Tibial artery (tissue), 4 donors: ENCODE measurements at regions of chr13 and their contacts with region 1.

Region 1: DNA sequence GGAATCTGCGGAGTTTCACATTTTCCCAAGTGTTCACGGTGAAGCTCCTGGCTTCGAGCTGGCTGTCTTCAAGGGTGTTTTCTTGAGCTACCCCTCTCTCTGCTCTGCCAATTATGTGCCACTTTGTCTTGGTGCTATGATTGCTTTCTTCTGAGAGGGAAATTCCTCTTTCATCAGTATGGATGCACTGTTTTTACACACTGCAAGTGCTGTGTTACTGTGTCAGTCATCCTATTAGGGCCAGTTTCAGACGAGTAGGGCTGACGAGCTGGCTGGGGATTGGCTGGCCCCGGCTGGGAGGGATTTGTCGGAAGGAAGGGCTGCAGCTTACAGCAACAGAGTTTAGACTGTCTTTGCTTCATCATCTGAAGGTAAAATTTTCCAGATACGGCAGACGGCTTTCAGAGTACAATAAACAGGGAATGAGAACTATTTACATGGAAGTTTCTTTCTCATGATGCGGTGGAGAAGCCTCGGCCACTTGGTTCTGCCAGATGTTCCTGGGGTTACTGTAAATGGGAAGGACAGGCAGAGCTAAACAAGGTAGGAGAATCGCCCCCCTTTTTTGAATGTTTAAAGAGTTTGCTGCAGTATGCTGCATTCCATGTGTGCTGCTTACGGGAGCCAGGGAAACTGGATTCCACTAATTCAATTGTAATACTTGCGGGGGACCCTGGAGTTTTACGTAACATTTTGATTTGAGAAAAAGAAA is at the start of gene MBNL2:
- DNase-seq: peak; percentile 90 to 94
- H3K4me3 ChIP-seq: peak within 1 kb of the TSS; percentile 65 to 72
- H3K27ac ChIP-seq: peak within 1 kb of the TSS; percentile 78 to 84
- H3K4me1 ChIP-seq: peaks cover 0 to 29% (median 18%) of the 10 kb centered on the region in 4 donors
- H3K27me3 ChIP-seq: no peaks in the 10 kb centered on the region
- CTCF ChIP-seq: no peak

Region 2: DNA sequence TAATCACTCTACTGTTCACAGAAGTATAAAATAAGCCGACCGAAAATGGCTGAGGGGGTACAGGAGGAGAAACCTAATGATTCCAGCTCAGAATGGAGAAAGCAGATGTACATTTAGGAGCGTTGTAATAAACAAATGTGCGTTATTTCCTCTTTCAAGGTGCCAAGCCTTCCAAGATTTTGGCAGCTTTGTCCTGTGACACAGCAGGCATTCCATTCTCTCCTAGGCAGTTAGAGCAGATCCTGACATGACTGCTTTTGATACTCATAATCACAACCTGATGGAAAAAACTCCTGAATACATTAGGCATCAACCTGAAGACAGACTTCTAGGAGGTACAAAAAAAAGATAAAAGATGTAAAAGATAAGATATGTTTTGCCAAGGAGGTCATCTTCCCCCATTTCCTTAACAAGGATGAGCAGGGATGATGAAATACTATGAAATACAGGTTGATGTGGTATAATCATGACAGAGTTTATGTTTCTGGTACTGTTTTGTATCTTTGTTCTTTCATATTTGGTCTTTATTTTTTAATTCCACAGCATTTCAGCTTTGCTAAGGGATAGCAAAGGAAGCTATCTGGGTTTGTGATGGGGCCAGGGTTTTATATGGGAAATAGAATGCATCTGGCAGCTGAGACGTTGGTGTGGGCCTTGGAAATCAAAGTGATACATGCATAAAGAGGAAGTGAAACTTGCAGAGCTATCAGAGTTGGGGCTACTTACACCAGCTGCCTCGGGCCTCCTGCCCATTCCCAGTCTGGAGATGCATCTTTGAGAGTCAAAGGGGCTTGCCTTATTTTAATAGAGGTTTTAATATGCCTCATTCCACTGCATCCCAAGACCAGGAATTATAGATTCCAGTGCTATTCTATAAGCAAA is 450.4 kb before region 1 on chr13:
- intact Hi-C with region 1: no loop called
- DNase-seq: peak in 1 of 2 donors; percentile 41
- H3K4me3 ChIP-seq: no peak overlapping the region
- H3K27ac ChIP-seq: no peak overlapping the region
- H3K4me1 ChIP-seq: no peaks in the 10 kb centered on the region
- H3K27me3 ChIP-seq: no peaks in the 10 kb centered on the region
- CTCF ChIP-seq: no peak

Region 3: DNA sequence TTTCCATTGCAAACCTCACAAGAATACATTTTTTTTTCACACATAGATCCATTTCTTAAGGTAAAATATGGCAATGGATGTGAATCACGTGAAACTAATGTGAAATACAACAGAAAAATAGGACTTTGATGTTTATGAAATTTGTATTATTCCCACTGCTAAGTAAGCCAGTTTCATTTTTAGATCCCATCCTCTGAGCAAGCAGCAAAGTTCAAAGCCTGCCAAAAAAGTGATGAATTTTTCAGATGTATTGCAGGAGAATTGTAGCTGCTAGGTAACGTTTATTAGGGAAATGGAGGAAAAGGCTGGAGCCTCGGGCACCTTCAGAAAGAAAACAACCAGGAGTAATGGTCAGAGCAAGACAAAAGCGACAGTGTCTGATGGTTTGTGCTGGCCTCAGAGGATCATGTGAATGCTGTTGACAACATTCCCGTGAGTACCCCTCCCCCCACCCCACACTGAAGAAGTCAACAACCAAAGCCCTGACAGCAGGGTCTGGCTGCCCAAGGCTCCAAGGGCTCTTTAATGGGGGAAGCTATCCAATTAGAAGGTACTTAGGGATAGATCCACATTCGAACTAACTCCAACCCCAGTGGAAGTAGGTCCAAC is 323.4 kb before region 1 on chr13:
- intact Hi-C with region 1: no loop called
- DNase-seq: no peak
- H3K4me3 ChIP-seq: no peak overlapping the region
- H3K27ac ChIP-seq: peak overlapping the region; percentile 38 to 47
- H3K4me1 ChIP-seq: peaks cover 0 to 13% (median 4%) of the 10 kb centered on the region in 4 donors
- H3K27me3 ChIP-seq: no peaks in the 10 kb centered on the region
- CTCF ChIP-seq: no peak

Region 4: GRCh38 chr13:97344265-97345175 is 122.4 kb after region 1 on chr13:
- intact Hi-C with region 1: loop called (anchors 5 kb)
- DNase-seq: peak in 1 of 2 donors; percentile 63
- H3K4me3 ChIP-seq: no peak overlapping the region
- H3K27ac ChIP-seq: no peak overlapping the region
- H3K4me1 ChIP-seq: peaks cover 0 to 29% (median 19%) of the 10 kb centered on the region in 4 donors
- H3K27me3 ChIP-seq: no peaks in the 10 kb centered on the region
- CTCF ChIP-seq: peak; percentile 56 to 73

Region 5: DNA sequence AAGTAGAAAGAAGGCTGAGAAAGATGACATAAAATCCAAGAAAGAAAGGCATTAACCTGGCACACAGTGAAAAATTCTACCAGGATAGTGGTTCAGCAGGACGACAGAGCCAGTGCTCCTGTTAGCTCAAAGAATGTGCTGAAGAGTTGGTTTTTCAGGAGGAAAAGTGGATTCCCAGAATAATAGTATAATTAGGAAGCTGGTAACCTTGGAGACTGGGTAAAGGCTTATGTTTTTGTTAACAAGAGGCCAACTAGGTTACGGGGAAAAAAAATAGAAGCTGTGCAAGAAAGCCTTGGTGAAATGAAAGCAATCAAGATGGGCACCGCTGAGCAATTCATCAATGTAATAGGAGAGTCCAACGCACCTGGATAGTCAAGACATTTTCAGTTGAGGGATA is 1475.6 kb after region 1 on chr13:
- intact Hi-C with region 1: no loop called
- DNase-seq: no peak
- H3K4me3 ChIP-seq: no peak overlapping the region
- H3K27ac ChIP-seq: no peak overlapping the region
- H3K4me1 ChIP-seq: no peaks in the 10 kb centered on the region
- H3K27me3 ChIP-seq: peaks cover 0 to 6% of the 10 kb centered on the region in 2 donors
- CTCF ChIP-seq: no peak